Activated T-helper 2 cell treated with anti-CD3 and anti-CD28 coated beads, Interferon-gamma antibody, Interleukin-2, Interleukin-4, amounts not matched to agents 10 μg/mL and 5 μg/mL and 100 μg/mL, durations not matched to agents 14 hours and 24 hours and 36 hours (primary cell): ENCODE measurements at regions of chr9 and their contacts with region 1.

Region 1: GRCh38 chr9:89602978-89603766 is 1.6 kb upstream of the GADD45G start:
- DNase-seq: peak; percentile 82
- H3K4me3 Mint-ChIP-seq: peak overlapping the region; percentile 83
- H3K27ac Mint-ChIP-seq: peak overlapping the region; percentile 81
- H3K4me1 Mint-ChIP-seq: peaks cover 25% of the 10 kb centered on the region
- H3K27me3 Mint-ChIP-seq: peaks cover 19% of the 10 kb centered on the region

Region 2: GRCh38 chr9:88889386-88889785 is 713.8 kb before region 1 on chr9:
- intact Hi-C with region 1: no loop called
- DNase-seq: no peak
- H3K4me3 Mint-ChIP-seq: no peak overlapping the region
- H3K27ac Mint-ChIP-seq: no peak overlapping the region
- H3K4me1 Mint-ChIP-seq: peaks cover 5% of the 10 kb centered on the region
- H3K27me3 Mint-ChIP-seq: peaks cover 27% of the 10 kb centered on the region

Region 3: DNA sequence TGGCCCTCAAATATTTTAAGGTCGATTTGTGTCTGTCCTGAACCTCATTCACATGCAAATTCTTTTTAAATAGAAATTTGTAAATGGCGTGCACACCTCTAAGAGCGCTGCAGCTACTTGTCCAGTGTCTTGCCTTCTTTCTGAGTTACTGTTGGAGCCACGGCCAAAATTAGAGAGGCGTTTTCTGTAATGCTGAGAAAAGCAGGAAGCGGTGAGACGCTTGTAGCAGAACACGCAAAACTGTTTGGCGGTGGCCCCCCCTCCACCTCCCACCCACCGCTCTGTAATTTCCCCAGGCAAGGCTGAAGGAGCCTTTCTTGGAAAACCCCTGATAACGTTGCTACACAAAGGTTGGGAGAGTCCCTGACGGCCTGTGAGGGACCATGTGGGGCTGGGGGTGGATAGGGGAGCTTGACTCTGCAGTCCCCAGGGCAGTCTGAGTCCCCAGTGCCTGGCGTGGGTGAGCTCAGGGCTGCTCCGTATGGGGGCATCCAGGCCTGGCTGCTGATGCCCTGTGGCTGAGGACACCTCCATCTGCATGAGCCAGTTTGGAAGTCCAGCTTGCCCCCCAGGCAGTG is 98.1 kb after region 1 on chr9:
- intact Hi-C with region 1: loop called (anchors 1 kb)
- DNase-seq: peak; percentile 62
- H3K4me3 Mint-ChIP-seq: peak overlapping the region; percentile 90
- H3K27ac Mint-ChIP-seq: peak overlapping the region; percentile 91
- H3K4me1 Mint-ChIP-seq: peaks cover 64% of the 10 kb centered on the region
- H3K27me3 Mint-ChIP-seq: no peaks in the 10 kb centered on the region

Region 4: GRCh38 chr9:89743573-89744361 is 140.6 kb after region 1 on chr9:
- intact Hi-C with region 1: loop called (anchors 1 kb)
- DNase-seq: peak; percentile 73
- H3K4me3 Mint-ChIP-seq: peak overlapping the region; percentile 6
- H3K27ac Mint-ChIP-seq: peak overlapping the region; percentile 97
- H3K4me1 Mint-ChIP-seq: peaks cover 76% of the 10 kb centered on the region
- H3K27me3 Mint-ChIP-seq: no peaks in the 10 kb centered on the region

Region 5: GRCh38 chr9:89919169-89919681 is 316.1 kb after region 1 on chr9:
- intact Hi-C with region 1: loop called (anchors 1 kb)
- DNase-seq: peak; percentile 31
- H3K4me3 Mint-ChIP-seq: peak overlapping the region; percentile 46
- H3K27ac Mint-ChIP-seq: peak overlapping the region; percentile 68
- H3K4me1 Mint-ChIP-seq: peaks cover 54% of the 10 kb centered on the region
- H3K27me3 Mint-ChIP-seq: peaks cover 1% of the 10 kb centered on the region

Region 6: DNA sequence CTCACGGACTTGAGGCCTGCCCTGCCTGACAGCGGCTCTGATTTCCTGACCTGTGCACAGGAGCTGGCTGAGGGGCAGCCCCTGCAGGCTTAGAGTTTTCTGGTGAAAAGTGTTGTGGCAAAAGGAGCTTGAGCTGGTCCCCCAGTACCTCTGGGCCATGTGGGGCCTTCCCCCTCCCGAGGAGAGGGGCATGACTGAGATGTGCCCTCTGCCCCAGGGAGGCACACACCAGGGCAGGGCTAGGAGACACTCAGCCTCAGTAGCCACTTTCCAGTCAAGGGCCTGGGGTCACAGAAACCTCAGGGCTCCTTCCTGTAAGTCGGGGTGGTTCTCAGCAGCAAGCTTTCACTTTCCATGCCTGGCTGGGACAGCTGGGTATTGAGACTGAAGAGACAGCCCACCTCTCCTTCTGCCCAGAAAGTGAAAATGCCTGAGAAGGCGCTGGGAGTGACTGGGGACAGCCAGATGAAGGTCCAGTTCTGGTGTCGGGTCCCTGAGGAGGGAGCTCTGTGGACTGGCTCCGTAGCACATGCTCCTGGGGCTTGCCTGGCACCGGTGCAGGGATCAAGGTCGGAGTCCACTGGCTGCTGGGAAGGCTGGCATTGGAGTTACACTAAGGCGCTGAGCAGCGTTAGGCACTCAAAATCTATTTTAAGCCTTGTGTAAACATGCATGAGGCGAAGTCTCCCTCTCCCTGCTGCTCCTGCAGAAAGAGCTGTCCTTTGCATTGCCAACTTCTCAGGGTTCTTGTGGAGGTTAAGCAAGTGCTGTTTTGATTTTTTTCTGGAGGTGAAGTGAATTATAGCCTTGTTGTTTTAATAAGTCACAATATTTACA is 396.6 kb after region 1 on chr9:
- intact Hi-C with region 1: loop called (anchors 5 kb)
- DNase-seq: peak; percentile 55
- H3K4me3 Mint-ChIP-seq: peak overlapping the region; percentile 41
- H3K27ac Mint-ChIP-seq: peak overlapping the region; percentile 67
- H3K4me1 Mint-ChIP-seq: peaks cover 36% of the 10 kb centered on the region
- H3K27me3 Mint-ChIP-seq: peaks cover 5% of the 10 kb centered on the region

Region 7: DNA sequence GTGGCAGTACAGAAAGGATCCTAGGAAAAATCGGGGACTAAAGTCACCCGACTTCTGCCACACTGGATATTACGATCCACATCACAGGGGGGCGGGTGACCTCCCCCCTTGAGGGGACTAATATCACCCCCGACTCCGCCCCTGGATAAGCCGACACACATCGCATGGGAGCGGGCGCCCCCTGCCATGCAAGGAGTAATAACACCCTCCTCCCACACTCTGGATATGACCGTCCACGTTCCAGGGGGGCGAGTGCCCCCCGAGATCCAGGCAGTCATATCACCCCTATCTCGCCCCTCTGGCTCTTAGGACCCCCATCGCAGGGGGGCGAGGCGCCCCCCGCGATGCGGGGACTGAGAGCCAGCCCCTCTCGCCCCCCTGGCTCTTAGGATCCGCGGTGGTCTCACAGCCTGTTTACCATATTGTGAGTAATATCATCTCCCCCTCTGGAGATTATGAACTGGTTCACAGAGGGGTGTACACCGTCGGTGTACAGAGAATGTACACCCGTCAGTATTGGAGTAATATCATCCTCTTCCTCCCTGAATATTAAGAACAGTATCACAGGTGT is 616.5 kb after region 1 on chr9:
- intact Hi-C with region 1: loop called (anchors 5 kb)
- DNase-seq: no peak
- H3K4me3 Mint-ChIP-seq: no peak overlapping the region
- H3K27ac Mint-ChIP-seq: no peak overlapping the region
- H3K4me1 Mint-ChIP-seq: no peaks in the 10 kb centered on the region
- H3K27me3 Mint-ChIP-seq: no peaks in the 10 kb centered on the region